Right cardiac atrium (tissue), 5 donors: ENCODE measurements at regions of chr6 and their contacts with region 1.

Region 1: GRCh38 chr6:148177589-148178233 is 164.9 kb upstream of the SASH1 start:
- DNase-seq: peak; percentile 70 to 91 (median 79)
- ATAC-seq: peak in 1 of 2 donors; percentile 55
- H3K4me3 ChIP-seq: no peak overlapping the region
- H3K27ac ChIP-seq: no peak overlapping the region
- H3K4me1 ChIP-seq: no peaks in the 10 kb centered on the region
- H3K27me3 ChIP-seq: no peaks in the 10 kb centered on the region

Region 2: GRCh38 chr6:148250975-148251685 is 73.4 kb after region 1 on chr6:
- intact Hi-C with region 1: loop called in 1 of 4 experiments (anchors 10 kb)
- DNase-seq: no peak
- ATAC-seq: peak; percentile 63 to 71
- H3K4me3 ChIP-seq: no peak overlapping the region
- H3K27ac ChIP-seq: no peak overlapping the region
- H3K4me1 ChIP-seq: peaks cover 1% of the 10 kb centered on the region
- H3K27me3 ChIP-seq: no peaks in the 10 kb centered on the region